ENCODE measurements at regions of chr14 and their contacts with region 1.

Region 1: GRCh38 chr14:68307014-68307789 is 485.7 kb downstream of the ZFP36L1 start:
- DNase-seq: peak; percentile 87
- H3K4me3 Mint-ChIP-seq: peak overlapping the region; percentile 43
- H3K27ac Mint-ChIP-seq: peak overlapping the region; percentile 98
- H3K4me1 Mint-ChIP-seq: peaks cover 40% of the 10 kb centered on the region
- H3K27me3 Mint-ChIP-seq: no peaks in the 10 kb centered on the region
- CTCF ChIP-seq: no peak

Region 2: GRCh38 chr14:68164711-68165113 is 142.5 kb before region 1 on chr14:
- CTCF ChIA-PET with region 1: no interaction called
- intact Hi-C with region 1: loop called (anchors 10 kb)
- DNase-seq: peak; percentile 20
- H3K4me3 Mint-ChIP-seq: peak overlapping the region; percentile 5
- H3K27ac Mint-ChIP-seq: peak overlapping the region; percentile 89
- H3K4me1 Mint-ChIP-seq: peaks cover 80% of the 10 kb centered on the region
- H3K27me3 Mint-ChIP-seq: no peaks in the 10 kb centered on the region
- CTCF ChIP-seq: no peak

Region 3: GRCh38 chr14:68278581-68279436 is 28.4 kb before region 1 on chr14:
- CTCF ChIA-PET with region 1: interaction called, 10 read pairs
- intact Hi-C with region 1: loop called (anchors 2 kb)
- DNase-seq: peak; percentile 27
- H3K4me3 Mint-ChIP-seq: peak overlapping the region; percentile 22
- H3K27ac Mint-ChIP-seq: peak overlapping the region; percentile 88
- H3K4me1 Mint-ChIP-seq: peaks cover 43% of the 10 kb centered on the region
- H3K27me3 Mint-ChIP-seq: no peaks in the 10 kb centered on the region
- CTCF ChIP-seq: no peak

Region 4: GRCh38 chr14:68341411-68342212 is 34.4 kb after region 1 on chr14:
- CTCF ChIA-PET with region 1: no interaction called
- intact Hi-C with region 1: no loop called
- DNase-seq: no peak
- H3K4me3 Mint-ChIP-seq: no peak overlapping the region
- H3K27ac Mint-ChIP-seq: no peak overlapping the region
- H3K4me1 Mint-ChIP-seq: no peaks in the 10 kb centered on the region
- H3K27me3 Mint-ChIP-seq: no peaks in the 10 kb centered on the region
- CTCF ChIP-seq: no peak

Region 5: DNA sequence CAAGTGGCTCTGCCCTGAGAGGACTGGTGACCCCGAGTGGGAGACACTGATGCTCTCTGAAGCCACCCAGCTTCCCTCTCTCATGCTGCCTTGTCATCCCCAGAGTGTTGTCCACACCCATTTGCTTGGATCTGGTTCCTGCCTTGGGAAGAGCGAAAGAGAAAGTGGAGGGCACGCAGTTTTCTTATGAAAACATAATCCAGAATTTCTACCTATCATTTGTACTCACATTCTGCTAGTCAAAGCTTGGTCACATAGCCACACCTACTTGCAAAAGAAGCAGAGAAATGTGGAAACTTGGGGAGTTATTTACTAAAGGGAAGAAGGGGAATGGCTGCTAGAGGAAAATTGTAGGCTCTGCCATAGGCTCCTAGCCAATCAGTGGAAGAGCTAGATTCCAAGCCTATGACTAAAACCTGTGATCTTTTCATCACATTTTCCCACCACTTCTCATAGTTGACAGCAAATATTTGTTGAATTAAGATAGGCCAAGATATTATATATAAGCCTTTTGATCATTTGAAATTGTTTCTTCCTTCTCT is 159.4 kb after region 1 on chr14:
- CTCF ChIA-PET with region 1: no interaction called
- intact Hi-C with region 1: loop called (anchors 2 kb)
- DNase-seq: peak; percentile 33
- H3K4me3 Mint-ChIP-seq: no peak overlapping the region
- H3K27ac Mint-ChIP-seq: no peak overlapping the region
- H3K4me1 Mint-ChIP-seq: peaks cover 48% of the 10 kb centered on the region
- H3K27me3 Mint-ChIP-seq: no peaks in the 10 kb centered on the region
- CTCF ChIP-seq: no peak

Region 6: GRCh38 chr14:68598621-68599447 is 291.6 kb after region 1 on chr14:
- CTCF ChIA-PET with region 1: interaction called, 11 read pairs
- intact Hi-C with region 1: no loop called
- DNase-seq: peak; percentile 70
- H3K4me3 Mint-ChIP-seq: peak overlapping the region; percentile 62
- H3K27ac Mint-ChIP-seq: peak overlapping the region; percentile 96
- H3K4me1 Mint-ChIP-seq: peaks cover 52% of the 10 kb centered on the region
- H3K27me3 Mint-ChIP-seq: no peaks in the 10 kb centered on the region
- CTCF ChIP-seq: no peak

Measured in Calu3 (cell line).